ENCODE measurements at regions of chr2 and their contacts with region 1.

Region 1: GRCh38 chr2:66041902-66042657 is 392.8 kb upstream of the MEIS1 start:
- DNase-seq: no peak
- H3K4me3 ChIP-seq: no peak overlapping the region
- H3K27ac ChIP-seq: no peak overlapping the region
- H3K4me1 ChIP-seq: no peaks in the 10 kb centered on the region
- H3K27me3 ChIP-seq: no peaks in the 10 kb centered on the region
- CTCF ChIP-seq: no peak

Region 2: DNA sequence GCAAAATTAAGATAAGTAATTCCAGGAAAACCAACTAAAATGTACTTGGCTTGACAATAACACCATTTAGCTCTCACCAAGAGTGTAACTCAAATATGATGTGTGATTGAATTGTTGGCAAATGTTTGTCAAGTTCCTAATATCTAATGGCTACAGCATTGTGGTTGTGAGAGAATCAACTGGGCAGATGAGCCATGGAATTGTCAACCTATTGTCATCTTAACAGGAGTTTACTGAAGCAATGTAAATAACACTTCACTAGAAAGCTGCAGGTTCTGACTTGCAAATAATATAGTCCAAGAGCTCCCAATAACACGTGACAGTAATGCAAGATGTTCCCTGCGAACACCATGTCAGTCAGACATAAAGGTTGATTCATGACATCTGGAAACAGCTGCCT is 102.4 kb before region 1 on chr2:
- CTCF ChIA-PET with region 1: interaction called, 11 read pairs
- POLR2A ChIA-PET with region 1: no interaction called
- intact Hi-C with region 1: no loop called
- DNase-seq: no peak
- H3K4me3 ChIP-seq: no peak overlapping the region
- H3K27ac ChIP-seq: no peak overlapping the region
- H3K4me1 ChIP-seq: no peaks in the 10 kb centered on the region
- H3K27me3 ChIP-seq: no peaks in the 10 kb centered on the region
- CTCF ChIP-seq: no peak

Measured in A673 (cell line).